ENCODE measurements at regions of chr1 and their contacts with region 1.

Region 1: GRCh38 chr1:47934243-47934805 is 62.9 kb downstream of the TRABD2B start:
- DNase-seq: no peak
- ATAC-seq: peak; percentile 38
- H3K4me3 ChIP-seq: no peak overlapping the region
- H3K27ac ChIP-seq: no peak overlapping the region
- H3K4me1 ChIP-seq: peaks cover 45% of the 10 kb centered on the region
- H3K27me3 ChIP-seq: peaks cover 0 to 12% of the 10 kb centered on the region in 2 experiments; a peak in 2 of 5 replicates
- CTCF ChIP-seq: no peak
- EP300 ChIP-seq: no peak
- POLR2A ChIP-seq: no peak
- RAD21 ChIP-seq: no peak

Region 2: GRCh38 chr1:47738560-47739182 is 195.7 kb before region 1 on chr1:
- CTCF ChIA-PET with region 1: interaction called, 27 read pairs
- POLR2A ChIA-PET with region 1: no interaction called
- in situ Hi-C with region 1: loop called (anchors 5 kb)
- intact Hi-C with region 1: loop called (anchors 1 kb)
- DNase-seq: peak; percentile 35
- ATAC-seq: peak; percentile 93
- H3K4me3 ChIP-seq: no peak overlapping the region
- H3K27ac ChIP-seq: no peak overlapping the region
- H3K4me1 ChIP-seq: no peaks in the 10 kb centered on the region
- H3K27me3 ChIP-seq: peaks cover 3% of the 10 kb centered on the region in 2 experiments; a peak in 2 of 5 replicates
- CTCF ChIP-seq: peak; percentile 89
- EP300 ChIP-seq: no peak
- POLR2A ChIP-seq: no peak
- RAD21 ChIP-seq: peak; percentile 56

Region 3: DNA sequence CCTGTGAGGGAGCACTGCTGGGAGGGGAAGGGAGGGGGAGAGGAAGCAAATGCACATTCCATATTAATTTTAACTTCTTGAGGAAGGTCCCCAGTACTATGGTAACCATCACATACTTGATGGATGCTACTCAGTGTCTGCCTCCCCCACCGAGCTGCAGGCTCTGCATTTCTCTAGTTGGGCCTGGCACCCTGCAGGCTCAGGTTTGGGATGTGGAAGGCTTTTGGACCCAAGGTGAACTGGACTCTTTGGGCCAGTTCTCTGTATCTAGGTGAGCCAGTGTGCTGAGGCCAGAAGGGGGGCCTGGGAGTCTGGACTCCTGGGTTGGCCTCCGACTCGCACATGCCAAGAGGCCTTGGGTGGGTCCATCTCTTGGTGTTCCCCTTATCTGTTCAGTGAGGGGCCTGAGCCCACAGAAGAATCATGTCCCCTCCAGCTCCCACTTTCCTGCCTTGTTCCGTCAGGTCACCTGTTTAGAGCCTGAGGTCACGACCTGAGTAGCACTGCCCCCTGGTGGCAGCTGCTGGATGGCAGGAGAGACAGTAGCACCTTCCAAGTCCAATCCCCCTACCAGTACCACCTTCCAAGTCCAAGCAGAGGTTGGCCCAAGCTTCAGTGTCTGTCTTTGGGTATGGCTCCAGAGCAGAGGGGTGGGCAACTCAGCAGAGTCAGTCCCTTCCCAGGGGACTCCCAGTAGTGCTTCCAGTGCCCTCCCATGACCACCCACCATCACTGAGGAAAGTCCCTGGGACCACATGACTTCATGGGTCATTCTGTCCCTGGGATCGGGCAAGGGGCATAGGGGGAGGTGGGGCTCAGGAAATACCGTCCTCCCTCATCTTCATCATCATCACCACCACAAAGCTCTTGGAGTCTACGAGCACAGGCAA is 179.0 kb before region 1 on chr1:
- CTCF ChIA-PET with region 1: interaction called, 3 read pairs
- POLR2A ChIA-PET with region 1: no interaction called
- in situ Hi-C with region 1: no loop called
- intact Hi-C with region 1: loop called (anchors 1 kb)
- DNase-seq: peak; percentile 35
- ATAC-seq: peak; percentile 85
- H3K4me3 ChIP-seq: no peak overlapping the region
- H3K27ac ChIP-seq: no peak overlapping the region
- H3K4me1 ChIP-seq: no peaks in the 10 kb centered on the region
- H3K27me3 ChIP-seq: peaks cover 4 to 36% of the 10 kb centered on the region in 2 experiments; a peak in 4 of 5 replicates
- CTCF ChIP-seq: peak; percentile 77
- EP300 ChIP-seq: no peak
- POLR2A ChIP-seq: no peak
- RAD21 ChIP-seq: 0 out of 2 replicates have a peak, but pooled peaks have one; percentile 20

Region 4: DNA sequence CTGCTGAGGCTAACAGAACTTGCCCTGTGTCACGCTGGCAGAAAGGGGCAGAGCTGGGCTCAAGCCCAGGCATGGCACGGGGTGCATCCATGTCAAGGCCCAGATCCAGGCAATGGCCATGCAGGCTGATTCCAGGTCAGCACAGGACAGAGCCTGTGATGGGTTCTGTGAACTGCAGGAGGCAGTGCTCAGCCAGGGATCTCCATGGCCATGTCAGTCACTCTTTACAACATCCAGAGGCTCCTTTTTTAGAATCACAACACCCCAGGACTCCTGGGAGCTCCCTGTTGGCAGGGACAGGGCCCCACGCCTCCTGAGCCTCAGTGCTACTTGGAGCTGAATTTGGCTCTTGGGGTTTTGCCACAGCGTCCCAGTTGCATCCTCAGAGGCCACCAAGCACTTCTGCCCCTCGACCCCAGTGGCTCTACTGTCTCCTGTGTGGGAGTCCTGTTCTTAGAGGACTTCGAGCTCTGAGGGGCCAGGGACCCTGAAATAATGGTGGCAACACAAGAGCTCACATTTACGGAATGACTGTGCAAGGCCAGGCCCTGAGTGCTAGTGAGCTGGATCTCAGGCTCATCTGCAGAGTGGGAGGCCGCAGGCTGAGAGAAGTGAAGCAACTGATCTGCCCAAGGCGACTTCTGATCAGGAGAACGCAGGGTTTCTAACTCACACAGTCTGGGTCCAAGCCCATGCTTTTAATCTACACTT is 148.6 kb before region 1 on chr1:
- CTCF ChIA-PET with region 1: interaction called, 20 read pairs
- POLR2A ChIA-PET with region 1: no interaction called
- in situ Hi-C with region 1: loop called (anchors 5 kb)
- intact Hi-C with region 1: loop called (anchors 1 kb)
- DNase-seq: peak; percentile 41
- ATAC-seq: peak; percentile 86
- H3K4me3 ChIP-seq: peak overlapping the region in 1 of 3 experiments; percentile 30; a peak in 2 of 6 replicates
- H3K27ac ChIP-seq: no peak overlapping the region
- H3K4me1 ChIP-seq: peaks cover 57% of the 10 kb centered on the region
- H3K27me3 ChIP-seq: peaks cover 0 to 1% of the 10 kb centered on the region in 2 experiments; a peak in 1 of 5 replicates
- CTCF ChIP-seq: peak; percentile 84
- EP300 ChIP-seq: no peak
- POLR2A ChIP-seq: no peak
- RAD21 ChIP-seq: peak; percentile 81

Region 5: GRCh38 chr1:47818682-47819573 is 115.4 kb before region 1 on chr1:
- CTCF ChIA-PET with region 1: no interaction called
- POLR2A ChIA-PET with region 1: no interaction called
- in situ Hi-C with region 1: no loop called
- intact Hi-C with region 1: no loop called
- DNase-seq: no peak
- ATAC-seq: peak; percentile 12; the same call in 2 of the 3 replicates
- H3K4me3 ChIP-seq: no peak overlapping the region
- H3K27ac ChIP-seq: peak overlapping the region; percentile 54
- H3K4me1 ChIP-seq: peaks cover 98% of the 10 kb centered on the region
- H3K27me3 ChIP-seq: no peaks in the 10 kb centered on the region; a peak in 1 of 5 replicates
- CTCF ChIP-seq: no peak
- EP300 ChIP-seq: no peak
- POLR2A ChIP-seq: no peak
- RAD21 ChIP-seq: no peak

Region 6: DNA sequence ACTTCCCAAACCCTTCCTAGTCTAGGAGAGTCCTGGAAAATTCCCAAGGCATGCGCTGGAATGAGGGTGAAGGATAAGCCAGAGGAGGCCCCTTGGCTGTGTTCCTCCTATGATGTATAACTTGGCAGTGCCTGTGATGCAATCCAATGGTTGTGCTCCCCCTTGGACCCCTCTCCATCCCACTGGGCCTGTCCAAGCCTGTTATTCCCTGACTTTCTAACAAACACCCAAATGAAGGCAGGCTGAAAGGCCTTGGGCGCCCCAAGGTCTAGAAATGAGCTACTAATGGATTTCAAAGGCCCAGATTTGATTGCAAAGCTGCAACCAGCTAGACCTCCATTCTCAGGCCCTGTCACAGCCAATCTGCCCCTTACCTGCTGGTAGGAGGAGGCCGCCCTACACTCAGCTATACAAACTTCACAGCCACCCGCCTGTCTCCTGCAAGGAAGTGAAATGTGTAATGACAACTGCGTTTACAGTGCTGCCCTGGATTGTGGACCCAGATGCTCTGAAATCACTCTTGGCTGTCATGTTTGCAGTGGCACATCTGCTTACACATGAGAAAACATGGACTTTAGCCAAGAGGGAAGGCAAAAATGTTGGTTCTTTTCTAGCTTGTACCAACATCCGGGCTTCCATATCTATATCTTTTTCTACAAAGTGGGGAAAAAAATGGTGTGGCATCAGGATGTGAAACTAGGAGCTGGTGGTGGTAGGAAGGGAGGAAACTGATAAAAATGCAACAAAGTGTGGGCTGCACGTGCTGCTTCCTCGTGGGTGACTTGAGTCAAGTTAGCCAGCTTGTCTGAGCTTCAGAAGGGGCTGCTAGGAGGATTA is 67.5 kb before region 1 on chr1:
- CTCF ChIA-PET with region 1: no interaction called
- POLR2A ChIA-PET with region 1: no interaction called
- in situ Hi-C with region 1: no loop called
- intact Hi-C with region 1: loop called (anchors 5 kb)
- DNase-seq: peak; percentile 96
- ATAC-seq: peak; percentile 90
- H3K4me3 ChIP-seq: peak overlapping the region; percentile 14 to 53 (median 15); a peak in 4 of 6 replicates
- H3K27ac ChIP-seq: peak overlapping the region; percentile 97
- H3K4me1 ChIP-seq: peaks cover 83% of the 10 kb centered on the region
- H3K27me3 ChIP-seq: no peaks in the 10 kb centered on the region
- CTCF ChIP-seq: peak; percentile 33
- EP300 ChIP-seq: peak; percentile 31 to 91; a peak in 3 of 4 replicates
- POLR2A ChIP-seq: peak; percentile 53 to 65; a peak in 3 of 4 replicates
- RAD21 ChIP-seq: no peak

Region 7: GRCh38 chr1:47913225-47913823 is 21.0 kb before region 1 on chr1:
- CTCF ChIA-PET with region 1: no interaction called
- POLR2A ChIA-PET with region 1: interaction called, 39 read pairs
- in situ Hi-C with region 1: no loop called
- intact Hi-C with region 1: loop called (anchors 2 kb)
- DNase-seq: peak; percentile 98
- ATAC-seq: peak; percentile 83
- H3K4me3 ChIP-seq: peak overlapping the region; percentile 47 to 65 (median 53)
- H3K27ac ChIP-seq: peak overlapping the region; percentile 98
- H3K4me1 ChIP-seq: peaks cover 95% of the 10 kb centered on the region
- H3K27me3 ChIP-seq: no peaks in the 10 kb centered on the region
- CTCF ChIP-seq: no peak
- EP300 ChIP-seq: peak; percentile 51 to 93; a peak in 3 of 4 replicates
- POLR2A ChIP-seq: peak; percentile 75 to 88
- RAD21 ChIP-seq: peak; percentile 41; the same call in 1 of the 2 replicates

Region 8: GRCh38 chr1:48069662-48070432 is 135.5 kb after region 1 on chr1:
- CTCF ChIA-PET with region 1: no interaction called
- POLR2A ChIA-PET with region 1: no interaction called
- in situ Hi-C with region 1: no loop called
- intact Hi-C with region 1: no loop called
- DNase-seq: no peak
- ATAC-seq: no peak
- H3K4me3 ChIP-seq: no peak overlapping the region
- H3K27ac ChIP-seq: no peak overlapping the region
- H3K4me1 ChIP-seq: peaks cover 18% of the 10 kb centered on the region
- H3K27me3 ChIP-seq: peaks cover 0 to 2% of the 10 kb centered on the region in 2 experiments; a peak in 1 of 5 replicates
- CTCF ChIP-seq: no peak
- EP300 ChIP-seq: no peak
- POLR2A ChIP-seq: no peak
- RAD21 ChIP-seq: no peak

Measured in HepG2 (cell line).